ENCODE measurements at regions of chr17 and their contacts with region 1.

Region 1: GRCh38 chr17:42997984-42998938 is at the start of gene RPL27:
- DNase-seq: peak; percentile 95
- ATAC-seq: peak; percentile 95
- H3K4me3 Mint-ChIP-seq: peak within 1 kb of the TSS; percentile 98
- H3K27ac Mint-ChIP-seq: peak within 1 kb of the TSS; percentile 97
- H3K4me1 Mint-ChIP-seq: peaks cover 31% of the 10 kb centered on the region
- H3K27me3 Mint-ChIP-seq: no peaks in the 10 kb centered on the region
- CTCF ChIP-seq: peak; percentile 78
- total RNA-seq, gene RPL27: 1,189 and 1,266 TPM in 2 replicates

Region 2: DNA sequence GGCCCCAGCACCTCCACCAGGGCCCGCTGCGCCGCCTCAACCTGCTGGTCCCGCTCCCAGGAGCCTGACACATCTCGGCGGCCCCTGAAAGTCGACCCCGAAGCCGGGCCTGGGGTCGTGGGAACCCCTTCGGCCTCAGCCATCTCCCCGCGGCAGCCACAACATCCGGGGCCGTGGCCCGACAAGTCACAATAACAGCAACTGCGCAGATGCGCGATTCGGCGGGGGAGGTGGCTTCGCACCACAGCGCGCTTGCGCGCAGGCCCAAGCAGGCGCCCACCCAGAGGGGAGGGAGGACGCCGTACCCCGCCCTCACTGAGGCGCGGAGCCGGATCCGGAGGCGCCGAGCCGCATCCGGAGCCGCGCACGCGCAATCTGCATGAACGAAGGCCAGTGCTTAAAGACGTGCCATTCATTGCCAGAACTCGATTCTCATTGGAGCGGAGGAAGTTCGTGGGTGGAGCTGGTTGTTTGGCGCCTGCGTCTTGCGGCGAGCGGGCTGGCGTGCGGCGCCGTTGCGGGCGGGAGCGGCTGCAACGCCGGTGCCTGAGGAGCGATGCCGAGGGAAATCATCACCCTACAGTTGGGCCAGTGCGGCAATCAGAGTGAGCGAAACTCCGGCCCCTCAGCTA is 389.0 kb before region 1 on chr17 and contains the starts of genes RETREG3 and TUBG1:
- CTCF ChIA-PET with region 1: no interaction called
- POLR2A ChIA-PET with region 1: interaction called, 15 read pairs
- intact Hi-C with region 1: no loop called
- DNase-seq: peak; percentile 98
- ATAC-seq: peak; percentile 90
- H3K4me3 Mint-ChIP-seq: peak within 1 kb of the TSS; percentile 100
- H3K27ac Mint-ChIP-seq: peak within 1 kb of the TSS; percentile 98
- H3K4me1 Mint-ChIP-seq: peaks cover 47% of the 10 kb centered on the region
- H3K27me3 Mint-ChIP-seq: no peaks in the 10 kb centered on the region
- CTCF ChIP-seq: no peak
- total RNA-seq, gene RETREG3: 60.0 and 63.5 TPM in 2 replicates
- total RNA-seq, gene TUBG1: 25.0 and 26.8 TPM in 2 replicates

Region 3: DNA sequence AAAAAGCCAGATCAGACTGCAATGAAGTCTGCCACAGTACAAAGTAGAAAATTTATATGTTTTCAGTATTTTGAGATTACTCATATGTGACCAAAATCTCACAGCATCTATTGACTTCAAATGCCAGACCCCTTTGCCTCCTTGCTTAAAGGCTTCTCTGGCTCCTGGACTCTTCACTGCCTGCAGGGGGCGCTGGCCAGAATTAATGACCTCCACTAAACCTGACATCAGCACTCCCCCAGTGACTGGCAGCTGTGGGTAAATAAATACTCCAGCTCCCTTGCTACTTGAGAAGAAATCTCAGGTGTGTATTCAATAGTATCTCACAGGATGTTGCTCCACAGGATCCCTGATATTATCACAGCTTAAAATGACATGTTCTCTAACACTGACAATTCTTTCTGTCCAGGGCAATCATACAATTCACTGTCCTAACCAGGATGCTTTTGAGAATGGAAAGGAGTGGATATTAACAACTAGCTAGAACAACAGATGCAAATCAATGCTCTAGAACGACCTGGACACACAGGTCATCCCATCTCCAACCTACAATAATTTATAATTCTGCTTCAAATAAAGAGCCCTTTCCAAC is 178.2 kb before region 1 on chr17:
- CTCF ChIA-PET with region 1: interaction called, 19 read pairs
- POLR2A ChIA-PET with region 1: interaction called, 25 read pairs
- intact Hi-C with region 1: loop called (anchors 1 kb)
- DNase-seq: peak; percentile 43
- ATAC-seq: peak; percentile 20
- H3K4me3 Mint-ChIP-seq: peak overlapping the region; percentile 28
- H3K27ac Mint-ChIP-seq: no peak overlapping the region
- H3K4me1 Mint-ChIP-seq: peaks cover 21% of the 10 kb centered on the region
- H3K27me3 Mint-ChIP-seq: no peaks in the 10 kb centered on the region
- CTCF ChIP-seq: no peak

Region 4: GRCh38 chr17:42964161-42964932 is 33.9 kb before region 1 on chr17 and contains the start of gene AARSD1:
- CTCF ChIA-PET with region 1: interaction called, 11 read pairs
- POLR2A ChIA-PET with region 1: interaction called, 49 read pairs
- intact Hi-C with region 1: loop called (anchors 1 kb)
- DNase-seq: peak; percentile 79
- ATAC-seq: peak; percentile 94
- H3K4me3 Mint-ChIP-seq: peak within 1 kb of the TSS; percentile 97
- H3K27ac Mint-ChIP-seq: peak within 1 kb of the TSS; percentile 87
- H3K4me1 Mint-ChIP-seq: peaks cover 14% of the 10 kb centered on the region
- H3K27me3 Mint-ChIP-seq: no peaks in the 10 kb centered on the region
- CTCF ChIP-seq: no peak
- total RNA-seq, gene AARSD1: 63.6 and 70.4 TPM in 2 replicates

Region 5: DNA sequence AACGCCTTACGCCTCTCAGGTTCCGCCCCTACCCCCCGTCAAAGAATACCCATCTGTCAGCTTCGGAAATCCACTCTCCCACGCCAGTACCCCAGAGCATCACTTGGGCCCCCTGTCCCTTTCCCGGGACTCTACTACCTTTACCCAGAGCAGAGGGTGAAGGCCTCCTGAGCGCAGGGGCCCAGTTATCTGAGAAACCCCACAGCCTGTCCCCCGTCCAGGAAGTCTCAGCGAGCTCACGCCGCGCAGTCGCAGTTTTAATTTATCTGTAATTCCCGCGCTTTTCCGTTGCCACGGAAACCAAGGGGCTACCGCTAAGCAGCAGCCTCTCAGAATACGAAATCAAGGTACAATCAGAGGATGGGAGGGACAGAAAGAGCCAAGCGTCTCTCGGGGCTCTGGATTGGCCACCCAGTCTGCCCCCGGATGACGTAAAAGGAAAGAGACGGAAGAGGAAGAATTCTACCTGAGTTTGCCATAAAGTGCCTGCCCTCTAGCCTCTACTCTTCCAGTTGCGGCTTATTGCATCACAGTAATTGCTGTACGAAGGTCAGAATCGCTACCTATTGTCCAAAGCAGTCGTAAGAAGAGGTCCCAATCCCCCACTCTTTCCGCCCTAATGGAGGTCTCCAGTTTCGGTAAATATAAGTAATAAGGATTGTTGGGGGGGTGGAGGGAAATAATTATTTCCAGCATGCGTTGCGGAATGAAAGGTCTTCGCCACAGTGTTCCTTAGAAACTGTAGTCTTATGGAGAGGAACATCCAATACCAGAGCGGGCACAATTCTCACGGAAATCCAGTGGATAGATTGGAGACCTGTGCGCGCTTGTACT is 127.1 kb after region 1 on chr17 and contains the start of gene BRCA1:
- CTCF ChIA-PET with region 1: no interaction called
- POLR2A ChIA-PET with region 1: interaction called, 5 read pairs
- intact Hi-C with region 1: loop called (anchors 2 kb)
- DNase-seq: peak; percentile 77
- ATAC-seq: peak; percentile 98
- H3K4me3 Mint-ChIP-seq: peak within 1 kb of the TSS; percentile 98
- H3K27ac Mint-ChIP-seq: peak within 1 kb of the TSS; percentile 90
- H3K4me1 Mint-ChIP-seq: peaks cover 44% of the 10 kb centered on the region
- H3K27me3 Mint-ChIP-seq: no peaks in the 10 kb centered on the region
- CTCF ChIP-seq: no peak
- total RNA-seq, gene BRCA1: 11.9 and 13.3 TPM in 2 replicates

Region 6: DNA sequence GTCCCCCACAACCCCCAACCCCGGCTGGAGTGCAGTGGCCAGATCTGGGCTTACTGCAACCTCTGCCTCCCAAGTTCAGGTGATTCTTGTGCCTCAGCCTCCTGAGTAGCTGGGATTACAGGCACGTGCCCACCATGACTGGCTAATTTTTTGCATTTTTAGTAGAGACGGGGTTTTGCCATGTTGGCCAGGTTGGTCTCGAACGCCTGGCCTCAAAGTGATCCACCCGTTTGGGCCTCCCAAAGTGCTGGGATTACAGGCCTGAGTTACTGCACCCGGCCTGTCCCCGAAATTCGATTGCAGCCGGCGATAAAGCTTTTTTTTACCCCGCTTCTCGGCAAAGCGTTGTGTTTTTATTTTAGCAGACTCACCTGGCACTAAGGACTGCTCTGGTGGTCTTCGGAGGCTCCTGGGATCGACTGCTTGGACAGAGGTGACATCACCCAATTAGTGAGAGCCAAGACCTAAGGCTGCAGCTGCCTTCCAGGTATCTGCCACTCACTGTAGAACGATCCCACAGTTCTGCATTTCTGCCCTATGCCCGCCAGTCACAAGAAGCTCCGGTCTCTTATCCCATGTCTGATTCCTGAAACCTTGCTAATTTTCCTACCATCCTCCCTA is 318.4 kb after region 1 on chr17:
- CTCF ChIA-PET with region 1: no interaction called
- POLR2A ChIA-PET with region 1: interaction called, 65 read pairs
- intact Hi-C with region 1: no loop called
- DNase-seq: peak; percentile 31
- ATAC-seq: no peak
- H3K4me3 Mint-ChIP-seq: no peak overlapping the region
- H3K27ac Mint-ChIP-seq: no peak overlapping the region
- H3K4me1 Mint-ChIP-seq: peaks cover 17% of the 10 kb centered on the region
- H3K27me3 Mint-ChIP-seq: no peaks in the 10 kb centered on the region
- CTCF ChIP-seq: no peak

Region 7: GRCh38 chr17:43388359-43389045 is 390.2 kb after region 1 on chr17:
- CTCF ChIA-PET with region 1: interaction called, 4 read pairs
- POLR2A ChIA-PET with region 1: interaction called, 13 read pairs
- intact Hi-C with region 1: no loop called
- DNase-seq: peak; percentile 94
- ATAC-seq: peak; percentile 76
- H3K4me3 Mint-ChIP-seq: peak overlapping the region; percentile 88
- H3K27ac Mint-ChIP-seq: peak overlapping the region; percentile 96
- H3K4me1 Mint-ChIP-seq: peaks cover 38% of the 10 kb centered on the region
- H3K27me3 Mint-ChIP-seq: no peaks in the 10 kb centered on the region
- CTCF ChIP-seq: no peak

Measured in activated B cell treated with CpG ODN at 0.5 μM for 24 hours (primary cell).